PC-9 (cell line): ENCODE measurements at regions of chr1 and their contacts with region 1.

Region 1: DNA sequence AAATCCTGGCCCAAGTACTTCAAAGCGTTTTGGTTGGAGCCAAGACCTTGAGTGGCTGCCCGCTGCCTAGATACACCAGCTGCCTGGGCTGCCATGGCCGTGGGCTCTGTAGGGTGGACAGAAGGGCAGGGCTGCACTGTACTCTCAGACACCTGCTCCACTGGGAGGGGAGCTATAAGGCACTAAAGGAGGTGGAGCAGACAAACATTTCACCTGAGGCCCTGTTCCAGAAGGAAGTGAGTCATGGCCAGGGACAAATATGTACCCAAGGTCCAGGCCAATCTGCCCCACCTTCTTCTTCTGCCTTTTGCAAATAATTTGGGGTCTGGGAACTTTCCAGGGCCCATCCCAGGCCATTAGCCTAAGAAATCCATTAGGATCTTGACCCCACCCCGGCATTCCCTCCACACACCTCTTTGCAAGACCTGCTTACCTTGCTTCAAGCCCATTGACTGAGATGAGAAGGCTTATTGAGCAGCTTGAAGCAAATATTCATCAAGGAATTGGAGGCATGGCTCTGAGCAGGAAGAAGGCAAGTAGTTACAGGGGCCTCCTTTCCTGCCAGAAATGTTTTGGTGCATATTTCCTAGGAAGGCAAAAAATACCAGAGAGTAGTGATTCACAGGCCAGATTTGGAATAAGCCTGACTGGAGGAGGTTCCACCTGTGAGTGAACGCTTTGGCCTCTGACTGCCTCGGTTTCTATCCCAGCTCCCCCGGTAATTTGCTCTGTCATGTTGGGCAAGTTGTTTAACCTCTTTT is at the start of gene CAPN8:
- DNase-seq: peak; percentile 88 to 97
- H3K4me3 ChIP-seq: peak within 1 kb of the TSS; percentile 54
- H3K27ac ChIP-seq: peak within 1 kb of the TSS; percentile 98
- H3K4me1 ChIP-seq: peaks cover 96% of the 10 kb centered on the region
- H3K27me3 ChIP-seq: no peaks in the 10 kb centered on the region
- CTCF ChIP-seq: no peak
- total RNA-seq, gene CAPN8: 85.6 and 94.7 TPM in 2 replicates

Region 2: DNA sequence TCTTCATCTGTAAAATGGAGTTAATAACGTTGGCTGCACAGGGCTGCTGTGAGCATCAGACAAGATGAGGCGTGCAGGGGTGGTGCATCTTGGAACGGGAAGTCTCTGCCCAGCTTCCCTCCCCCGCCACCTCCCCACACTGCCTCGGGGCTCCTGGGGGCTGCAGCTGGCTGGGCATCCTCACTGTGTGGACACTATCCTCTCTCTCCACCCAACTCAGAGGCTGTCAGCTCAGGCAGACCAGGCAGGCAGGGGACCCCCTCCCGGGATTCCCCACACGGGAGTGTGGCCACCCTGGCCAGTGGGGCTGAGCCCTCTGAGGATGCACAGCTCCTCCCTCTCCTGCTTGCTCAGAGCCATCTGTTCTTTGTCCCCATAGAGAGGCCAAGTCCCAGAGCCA is 149.8 kb before region 1 on chr1:
- CTCF ChIA-PET with region 1: no interaction called
- POLR2A ChIA-PET with region 1: interaction called, 34 read pairs
- intact Hi-C with region 1: no loop called
- DNase-seq: no peak
- H3K4me3 ChIP-seq: no peak overlapping the region
- H3K27ac ChIP-seq: no peak overlapping the region
- H3K4me1 ChIP-seq: peaks cover 17% of the 10 kb centered on the region
- H3K27me3 ChIP-seq: 0 out of 2 replicates have a peak, but pooled peaks cover 3% of the 10 kb centered on the region
- CTCF ChIP-seq: no peak

Region 3: GRCh38 chr1:223639331-223639749 is 26.4 kb before region 1 on chr1:
- CTCF ChIA-PET with region 1: no interaction called
- POLR2A ChIA-PET with region 1: no interaction called
- intact Hi-C with region 1: loop called (anchors 2 kb)
- DNase-seq: peak; percentile 16 to 94
- H3K4me3 ChIP-seq: no peak overlapping the region
- H3K27ac ChIP-seq: peak overlapping the region; percentile 46
- H3K4me1 ChIP-seq: peaks cover 21% of the 10 kb centered on the region
- H3K27me3 ChIP-seq: no peaks in the 10 kb centered on the region
- CTCF ChIP-seq: no peak

Region 4: DNA sequence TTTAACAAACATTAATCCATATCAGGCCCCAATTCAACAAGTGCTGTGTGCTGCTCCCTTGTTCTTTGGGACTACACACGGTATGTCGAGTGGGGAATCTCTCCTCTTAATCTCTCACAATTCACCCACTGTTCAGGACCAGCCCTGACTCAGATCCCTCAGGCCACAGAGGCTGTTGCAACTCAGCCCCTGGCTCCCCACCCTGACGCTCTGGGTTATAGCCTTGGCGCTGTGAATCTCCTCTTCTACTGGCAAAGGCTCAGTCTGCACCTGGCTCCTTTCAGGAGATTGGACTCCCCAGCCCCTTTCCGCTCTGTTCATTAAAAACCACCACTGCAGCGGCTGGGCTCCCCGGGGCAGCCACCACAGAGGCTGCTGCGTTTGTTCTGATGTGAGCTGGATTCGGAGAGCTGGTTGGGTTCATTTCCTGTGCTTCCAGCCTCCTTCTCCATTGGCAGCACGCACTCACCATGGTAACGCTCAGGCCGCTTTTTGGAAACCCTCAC is 13.2 kb before region 1 on chr1:
- CTCF ChIA-PET with region 1: no interaction called
- POLR2A ChIA-PET with region 1: interaction called, 3 read pairs
- intact Hi-C with region 1: loop called (anchors 1 kb)
- DNase-seq: peak; percentile 51 to 74
- H3K4me3 ChIP-seq: no peak overlapping the region
- H3K27ac ChIP-seq: peak overlapping the region; percentile 75; the same call in 1 of the 2 replicates
- H3K4me1 ChIP-seq: peaks cover 58% of the 10 kb centered on the region
- H3K27me3 ChIP-seq: no peaks in the 10 kb centered on the region
- CTCF ChIP-seq: no peak

Region 5: DNA sequence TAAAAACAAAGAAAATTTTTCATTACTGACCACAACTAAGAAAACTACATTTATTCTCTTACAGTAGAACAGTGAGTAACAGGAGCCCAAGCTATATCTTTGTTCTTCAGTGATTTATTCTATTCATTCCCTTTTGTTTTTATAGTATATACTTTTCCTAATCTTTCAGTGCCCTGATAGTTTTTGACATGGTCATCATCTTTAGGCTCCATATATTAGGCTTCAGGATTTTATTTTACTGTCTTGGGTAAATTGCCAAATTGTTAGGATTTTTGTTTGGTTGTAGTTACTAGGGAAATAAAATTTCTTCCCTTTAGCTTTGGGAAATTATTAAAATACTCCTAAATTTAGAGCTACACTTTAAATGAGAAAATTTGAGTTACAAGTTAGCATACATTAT is 458.5 kb after region 1 on chr1:
- CTCF ChIA-PET with region 1: no interaction called
- POLR2A ChIA-PET with region 1: no interaction called
- intact Hi-C with region 1: no loop called
- DNase-seq: no peak
- H3K4me3 ChIP-seq: no peak overlapping the region
- H3K27ac ChIP-seq: no peak overlapping the region
- H3K4me1 ChIP-seq: peaks cover 15% of the 10 kb centered on the region; the same call in 1 of the 2 replicates
- H3K27me3 ChIP-seq: no peaks in the 10 kb centered on the region
- CTCF ChIP-seq: no peak